H1 (cell line): ENCODE measurements at regions of chr1 and their contacts with region 1.

Region 1: GRCh38 chr1:207885129-207886032 is 25.5 kb downstream of the CD34 start:
- DNase-seq: peak in 1 of 2 experiments; percentile 70
- H3K4me3 ChIP-seq: no peak overlapping the region
- H3K27ac ChIP-seq: no peak overlapping the region
- H3K4me1 ChIP-seq: no peaks in the 10 kb centered on the region; a peak in 1 of 7 replicates
- H3K27me3 ChIP-seq: no peaks in the 10 kb centered on the region; a peak in 1 of 7 replicates
- CTCF ChIP-seq: peak; percentile 92 to 97 (median 94)
- EP300 ChIP-seq: no peak
- POLR2A ChIP-seq: no peak
- RAD21 ChIP-seq: peak; percentile 93 to 95

Region 2: GRCh38 chr1:207828485-207829158 is 56.8 kb before region 1 on chr1:
- CTCF ChIA-PET with region 1: interaction called, 113 read pairs
- POLR2A ChIA-PET with region 1: no interaction called
- DNase-seq: peak; percentile 63 to 66
- H3K4me3 ChIP-seq: no peak overlapping the region
- H3K27ac ChIP-seq: no peak overlapping the region
- H3K4me1 ChIP-seq: no peaks in the 10 kb centered on the region; a peak in 1 of 7 replicates
- H3K27me3 ChIP-seq: no peaks in the 10 kb centered on the region
- CTCF ChIP-seq: peak; percentile 74 to 94 (median 91)
- EP300 ChIP-seq: no peak
- POLR2A ChIP-seq: no peak
- RAD21 ChIP-seq: peak; percentile 88 to 92

Region 3: DNA sequence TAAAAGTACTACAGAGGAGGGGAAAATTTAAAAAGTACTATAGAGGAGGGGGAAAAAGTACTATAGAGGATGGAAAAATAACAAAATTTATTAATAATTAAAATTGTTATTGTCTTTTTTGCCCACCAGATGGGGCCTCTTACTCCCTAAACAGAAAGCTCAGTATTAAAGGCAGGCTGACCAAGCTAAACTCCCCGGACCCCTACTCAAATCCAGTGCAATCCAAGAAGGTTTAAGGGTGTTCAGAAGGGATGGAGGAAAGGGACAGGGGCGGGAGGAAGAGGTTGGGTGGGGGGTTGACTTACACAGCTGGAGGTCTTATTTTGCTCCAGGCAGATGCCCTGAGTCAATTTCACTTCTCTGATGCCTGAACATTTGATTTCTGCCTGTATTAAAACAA is 11.8 kb after region 1 on chr1:
- CTCF ChIA-PET with region 1: interaction called, 106 read pairs
- POLR2A ChIA-PET with region 1: no interaction called
- DNase-seq: no peak
- H3K4me3 ChIP-seq: no peak overlapping the region
- H3K27ac ChIP-seq: no peak overlapping the region
- H3K4me1 ChIP-seq: no peaks in the 10 kb centered on the region
- H3K27me3 ChIP-seq: 0 out of 7 replicates have a peak, but pooled peaks cover 0 to 2% (median 0%) of the 10 kb centered on the region in 4 experiments
- CTCF ChIP-seq: peak in 1 of 3 experiments; percentile 29; a peak in 1 of 4 replicates
- EP300 ChIP-seq: no peak
- POLR2A ChIP-seq: no peak
- RAD21 ChIP-seq: peak; percentile 39 to 51

Region 4: DNA sequence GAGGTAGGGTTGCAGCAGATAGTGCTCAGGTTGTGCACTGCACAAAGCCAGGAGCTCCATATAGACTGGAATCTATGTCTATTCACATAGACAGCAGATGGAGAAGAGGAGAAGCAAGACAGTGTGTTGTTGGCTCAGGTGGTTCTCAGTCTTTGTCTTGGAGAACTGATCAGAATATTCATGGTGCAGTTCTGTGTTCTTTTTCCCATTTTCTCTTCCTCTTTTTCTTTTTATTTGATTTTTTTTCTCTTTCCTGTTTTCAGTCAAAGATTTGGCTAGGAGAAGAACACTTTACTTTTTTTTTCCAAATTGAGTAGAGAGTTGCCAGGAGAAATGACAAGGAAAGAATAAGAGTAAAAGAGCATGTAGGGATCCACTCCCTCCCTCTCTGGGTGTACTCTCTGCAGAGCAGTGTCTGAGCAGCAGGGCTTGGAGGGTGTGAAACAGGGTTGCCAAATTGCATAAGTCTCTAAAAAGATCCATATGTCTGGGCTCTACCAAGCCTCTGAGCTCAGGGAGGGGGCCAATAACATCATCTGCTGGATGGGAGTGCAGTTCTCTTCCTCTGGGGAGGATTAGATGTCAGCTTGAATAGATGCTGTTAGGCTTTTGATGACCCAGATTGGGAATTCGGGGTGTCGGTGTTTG is 34.3 kb after region 1 on chr1:
- CTCF ChIA-PET with region 1: interaction called, 14 read pairs
- POLR2A ChIA-PET with region 1: no interaction called
- DNase-seq: no peak
- H3K4me3 ChIP-seq: no peak overlapping the region
- H3K27ac ChIP-seq: no peak overlapping the region
- H3K4me1 ChIP-seq: no peaks in the 10 kb centered on the region; a peak in 2 of 7 replicates
- H3K27me3 ChIP-seq: no peaks in the 10 kb centered on the region
- CTCF ChIP-seq: no peak
- EP300 ChIP-seq: no peak
- POLR2A ChIP-seq: no peak
- RAD21 ChIP-seq: no peak

Region 5: GRCh38 chr1:207944571-207944970 is 59.2 kb after region 1 on chr1:
- CTCF ChIA-PET with region 1: interaction called, 27 read pairs
- POLR2A ChIA-PET with region 1: no interaction called
- DNase-seq: no peak
- H3K4me3 ChIP-seq: no peak overlapping the region
- H3K27ac ChIP-seq: no peak overlapping the region
- H3K4me1 ChIP-seq: no peaks in the 10 kb centered on the region
- H3K27me3 ChIP-seq: no peaks in the 10 kb centered on the region
- CTCF ChIP-seq: no peak
- EP300 ChIP-seq: no peak
- POLR2A ChIP-seq: no peak
- RAD21 ChIP-seq: no peak

Region 6: GRCh38 chr1:207981976-207982375 is 96.6 kb after region 1 on chr1:
- CTCF ChIA-PET with region 1: interaction called, 28 read pairs
- POLR2A ChIA-PET with region 1: no interaction called
- DNase-seq: peak in 1 of 2 experiments; percentile 52
- H3K4me3 ChIP-seq: no peak overlapping the region
- H3K27ac ChIP-seq: no peak overlapping the region
- H3K4me1 ChIP-seq: no peaks in the 10 kb centered on the region
- H3K27me3 ChIP-seq: no peaks in the 10 kb centered on the region
- CTCF ChIP-seq: peak; percentile 80 to 94 (median 93)
- EP300 ChIP-seq: no peak
- POLR2A ChIP-seq: no peak
- RAD21 ChIP-seq: peak; percentile 76 to 82